Activated naive CD4-positive, alpha-beta T cell treated with anti-CD3 and anti-CD28 coated beads for 36 hours (primary cell): ENCODE measurements at regions of chr17 and their contacts with region 1.

Region 1: DNA sequence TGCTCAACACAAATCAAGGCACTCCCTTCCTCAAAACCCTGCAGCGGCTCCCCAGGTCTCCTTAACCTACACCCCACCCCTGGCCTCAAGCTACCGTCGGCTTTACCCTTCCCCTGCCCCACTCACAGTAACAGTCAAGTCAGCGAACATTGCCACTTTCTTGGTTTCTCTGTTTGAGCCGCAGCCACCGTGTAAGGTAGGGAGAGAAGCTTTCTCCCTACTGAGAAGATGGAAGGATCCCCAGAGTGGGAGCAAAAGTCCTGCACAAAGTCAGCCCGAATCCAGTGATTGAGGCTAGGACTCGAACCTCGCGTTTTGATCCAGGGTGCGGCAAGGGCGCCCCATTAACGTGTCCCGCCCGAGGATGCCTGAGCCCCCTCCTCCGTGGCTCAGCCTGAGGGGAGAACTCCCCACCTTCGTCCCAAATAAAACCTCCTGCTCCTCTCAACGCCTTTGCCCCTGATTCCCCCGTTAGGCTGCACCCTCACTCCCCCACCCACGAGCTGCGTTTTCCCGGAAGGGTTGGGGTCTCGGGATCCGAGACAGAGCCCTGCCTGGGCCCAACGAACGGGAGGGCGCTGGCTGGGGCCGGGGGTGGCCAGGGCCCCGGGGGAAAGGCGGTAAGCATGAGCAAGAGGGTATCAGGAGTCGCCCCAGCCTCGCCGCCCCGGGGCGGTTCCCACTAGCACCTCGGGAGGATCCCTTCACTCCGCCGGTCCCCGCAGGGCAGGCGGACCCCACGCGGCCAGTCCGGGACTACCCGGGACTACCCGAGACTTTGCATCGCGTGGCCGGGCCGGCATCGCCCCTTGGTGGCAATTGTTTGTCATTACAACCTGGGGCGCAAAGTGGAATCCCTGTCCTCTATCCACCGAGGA is 9.9 kb upstream of the NAGS start:
- DNase-seq: peak; percentile 75
- H3K4me3 Mint-ChIP-seq: peak overlapping the region; percentile 39
- H3K27ac Mint-ChIP-seq: no peak overlapping the region
- H3K4me1 Mint-ChIP-seq: peaks cover 3% of the 10 kb centered on the region
- H3K27me3 Mint-ChIP-seq: peaks cover 8% of the 10 kb centered on the region

Region 2: DNA sequence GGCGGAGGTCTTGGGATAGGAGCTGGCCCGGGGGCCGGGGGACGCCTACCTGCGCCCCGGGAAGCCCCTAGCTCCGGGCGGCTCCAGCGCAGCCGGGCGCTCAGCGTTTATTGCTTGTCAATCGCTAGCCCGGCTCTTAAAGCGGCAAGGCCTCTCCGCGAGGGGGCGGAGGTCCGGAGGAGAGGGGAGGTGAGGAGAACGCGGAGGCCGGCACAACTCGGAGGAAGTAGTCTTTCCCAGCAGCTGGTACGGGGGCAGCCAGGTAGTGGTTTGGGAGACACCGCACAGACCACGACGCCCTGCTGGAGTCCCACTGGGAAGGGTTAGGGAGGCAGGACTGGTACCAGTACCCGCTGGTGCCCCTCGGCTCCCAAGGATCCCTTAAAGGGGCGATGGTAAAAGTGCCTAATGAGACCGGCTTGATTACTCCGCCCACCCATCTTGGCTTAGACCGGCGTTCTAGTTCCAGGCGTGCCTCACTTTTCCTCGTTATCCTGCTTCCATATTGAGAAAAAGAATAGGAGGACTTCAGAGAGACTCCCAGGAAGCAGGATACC is 87.0 kb before region 1 on chr17 and contains the start of gene MPP2:
- CTCF ChIA-PET with region 1: interaction called, 17 read pairs
- intact Hi-C with region 1: no loop called
- DNase-seq: peak; percentile 64
- H3K4me3 Mint-ChIP-seq: peak within 1 kb of the TSS; percentile 63
- H3K27ac Mint-ChIP-seq: no peak within 1 kb of the TSS
- H3K4me1 Mint-ChIP-seq: peaks cover 18% of the 10 kb centered on the region
- H3K27me3 Mint-ChIP-seq: peaks cover 4% of the 10 kb centered on the region
- total RNA-seq, gene MPP2: 2.3 to 2.5 TPM

Region 3: GRCh38 chr17:43917348-43918018 is 77.0 kb before region 1 on chr17:
- CTCF ChIA-PET with region 1: interaction called, 5 read pairs
- intact Hi-C with region 1: loop called (anchors 2 kb)
- DNase-seq: peak; percentile 73
- H3K4me3 Mint-ChIP-seq: peak overlapping the region; percentile 65
- H3K27ac Mint-ChIP-seq: peak overlapping the region; percentile 9
- H3K4me1 Mint-ChIP-seq: peaks cover 13% of the 10 kb centered on the region
- H3K27me3 Mint-ChIP-seq: no peaks in the 10 kb centered on the region

Region 4: GRCh38 chr17:44044067-44044466 is 49.6 kb after region 1 on chr17:
- CTCF ChIA-PET with region 1: no interaction called
- intact Hi-C with region 1: no loop called
- DNase-seq: no peak
- H3K4me3 Mint-ChIP-seq: no peak overlapping the region
- H3K27ac Mint-ChIP-seq: no peak overlapping the region
- H3K4me1 Mint-ChIP-seq: peaks cover 11% of the 10 kb centered on the region
- H3K27me3 Mint-ChIP-seq: no peaks in the 10 kb centered on the region